CD14-positive monocyte (primary cell): ENCODE measurements at regions of chr17 and their contacts with region 1.

Region 1: DNA sequence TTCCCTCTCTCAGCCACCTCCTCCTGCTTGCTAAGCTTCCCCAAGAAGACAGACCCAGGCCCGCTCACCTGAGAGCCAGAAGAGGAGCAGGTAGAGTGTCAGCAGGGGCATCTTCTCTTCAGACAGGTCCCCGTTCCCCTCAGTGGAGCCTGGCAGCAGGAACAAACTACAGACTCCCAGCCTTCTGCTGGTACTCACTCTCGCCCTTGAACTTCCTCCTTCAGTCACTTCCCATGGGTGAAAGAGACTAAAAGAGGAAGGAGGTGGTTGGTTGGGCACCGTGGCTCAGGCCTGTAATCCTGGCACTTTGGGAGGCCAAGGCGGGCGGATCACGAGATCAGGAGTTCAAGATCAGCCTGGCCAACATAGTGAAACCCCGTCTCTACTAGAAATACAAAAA is at the start of gene CD300LF:
- DNase-seq: peak; percentile 87 to 90 (median 90)
- H3K4me3 ChIP-seq: peak within 1 kb of the TSS; percentile 65 to 95 (median 95)
- H3K4me3 Mint-ChIP-seq: peak within 1 kb of the TSS; percentile 96 to 100
- H3K27ac ChIP-seq: peak within 1 kb of the TSS; percentile 83 to 90
- H3K27ac Mint-ChIP-seq: peak within 1 kb of the TSS; percentile 97 to 99 (median 98)
- H3K4me1 ChIP-seq: peaks cover 35 to 61% of the 10 kb centered on the region in 2 donors
- H3K4me1 Mint-ChIP-seq: peaks cover 55% of the 10 kb centered on the region
- H3K27me3 ChIP-seq: no peaks in the 10 kb centered on the region
- H3K27me3 Mint-ChIP-seq: peaks cover 1 to 6% (median 3%) of the 10 kb centered on the region in 3 donors
- CTCF ChIP-seq: no peak
- polyA plus RNA-seq, gene CD300LF: 112 to 184 (median 175) TPM

Region 2: GRCh38 chr17:74671031-74671771 is 41.6 kb before region 1 on chr17:
- intact Hi-C with region 1: loop called (anchors 5 kb)
- DNase-seq: peak; percentile 77 to 81 (median 77)
- H3K4me3 ChIP-seq: no peak overlapping the region
- H3K4me3 Mint-ChIP-seq: peak overlapping the region in 1 of 2 donors; percentile 74
- H3K27ac ChIP-seq: no peak overlapping the region
- H3K27ac Mint-ChIP-seq: peak overlapping the region in 1 of 7 donors; percentile 19
- H3K4me1 ChIP-seq: peaks cover 0 to 2% of the 10 kb centered on the region in 2 donors
- H3K4me1 Mint-ChIP-seq: peaks cover 3% of the 10 kb centered on the region
- H3K27me3 ChIP-seq: peaks cover 34 to 50% of the 10 kb centered on the region in 2 donors
- H3K27me3 Mint-ChIP-seq: peaks cover 48 to 60% (median 49%) of the 10 kb centered on the region in 3 donors
- CTCF ChIP-seq: no peak

Region 3: GRCh38 chr17:74677558-74678466 is 34.9 kb before region 1 on chr17:
- intact Hi-C with region 1: loop called (anchors 5 kb)
- DNase-seq: peak in 2 of 3 donors; percentile 28 to 35
- H3K4me3 ChIP-seq: peak overlapping the region in 1 of 3 experiments; percentile 42
- H3K4me3 Mint-ChIP-seq: peak overlapping the region in 1 of 2 donors; percentile 62
- H3K27ac ChIP-seq: no peak overlapping the region
- H3K27ac Mint-ChIP-seq: peak overlapping the region in 3 of 7 donors; percentile 16 to 74 (median 64)
- H3K4me1 ChIP-seq: peaks cover 57 to 58% of the 10 kb centered on the region in 2 donors
- H3K4me1 Mint-ChIP-seq: peaks cover 57% of the 10 kb centered on the region
- H3K27me3 ChIP-seq: peaks cover under 1 to 2% of the 10 kb centered on the region in 2 donors
- H3K27me3 Mint-ChIP-seq: peaks cover 6 to 13% (median 8%) of the 10 kb centered on the region in 3 donors
- CTCF ChIP-seq: no peak

Region 4: DNA sequence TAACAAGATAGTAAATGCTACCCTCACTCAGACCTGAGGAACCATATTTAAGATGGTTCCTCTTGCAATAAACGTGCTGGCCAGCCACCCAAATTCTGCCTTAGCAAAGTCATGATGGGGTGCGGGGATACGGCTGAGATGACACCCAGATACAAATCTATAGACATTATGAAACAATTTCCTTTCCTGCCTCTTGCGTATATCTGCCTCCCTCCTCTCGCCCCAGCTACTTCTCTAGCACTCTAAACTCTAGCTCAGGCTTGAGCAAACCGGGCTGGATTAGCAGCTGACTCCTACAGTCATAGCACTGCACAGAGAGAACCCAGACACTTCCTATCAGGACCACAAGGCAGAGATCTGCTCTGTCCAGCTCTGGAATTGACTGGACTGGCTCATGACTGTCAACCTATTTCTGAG is 22.3 kb before region 1 on chr17:
- intact Hi-C with region 1: loop called in 1 of 2 experiments (anchors 2 kb)
- DNase-seq: peak; percentile 93 to 98 (median 93)
- H3K4me3 ChIP-seq: peak overlapping the region in 1 of 3 experiments; percentile 56
- H3K4me3 Mint-ChIP-seq: no peak overlapping the region
- H3K27ac ChIP-seq: peak overlapping the region; percentile 92 to 98
- H3K27ac Mint-ChIP-seq: peak overlapping the region; percentile 95 to 98 (median 97)
- H3K4me1 ChIP-seq: peaks cover 78 to 94% of the 10 kb centered on the region in 2 donors
- H3K4me1 Mint-ChIP-seq: peaks cover 91% of the 10 kb centered on the region
- H3K27me3 ChIP-seq: no peaks in the 10 kb centered on the region
- H3K27me3 Mint-ChIP-seq: peaks cover 0 to 2% (median 0%) of the 10 kb centered on the region in 3 donors
- CTCF ChIP-seq: no peak

Region 5: DNA sequence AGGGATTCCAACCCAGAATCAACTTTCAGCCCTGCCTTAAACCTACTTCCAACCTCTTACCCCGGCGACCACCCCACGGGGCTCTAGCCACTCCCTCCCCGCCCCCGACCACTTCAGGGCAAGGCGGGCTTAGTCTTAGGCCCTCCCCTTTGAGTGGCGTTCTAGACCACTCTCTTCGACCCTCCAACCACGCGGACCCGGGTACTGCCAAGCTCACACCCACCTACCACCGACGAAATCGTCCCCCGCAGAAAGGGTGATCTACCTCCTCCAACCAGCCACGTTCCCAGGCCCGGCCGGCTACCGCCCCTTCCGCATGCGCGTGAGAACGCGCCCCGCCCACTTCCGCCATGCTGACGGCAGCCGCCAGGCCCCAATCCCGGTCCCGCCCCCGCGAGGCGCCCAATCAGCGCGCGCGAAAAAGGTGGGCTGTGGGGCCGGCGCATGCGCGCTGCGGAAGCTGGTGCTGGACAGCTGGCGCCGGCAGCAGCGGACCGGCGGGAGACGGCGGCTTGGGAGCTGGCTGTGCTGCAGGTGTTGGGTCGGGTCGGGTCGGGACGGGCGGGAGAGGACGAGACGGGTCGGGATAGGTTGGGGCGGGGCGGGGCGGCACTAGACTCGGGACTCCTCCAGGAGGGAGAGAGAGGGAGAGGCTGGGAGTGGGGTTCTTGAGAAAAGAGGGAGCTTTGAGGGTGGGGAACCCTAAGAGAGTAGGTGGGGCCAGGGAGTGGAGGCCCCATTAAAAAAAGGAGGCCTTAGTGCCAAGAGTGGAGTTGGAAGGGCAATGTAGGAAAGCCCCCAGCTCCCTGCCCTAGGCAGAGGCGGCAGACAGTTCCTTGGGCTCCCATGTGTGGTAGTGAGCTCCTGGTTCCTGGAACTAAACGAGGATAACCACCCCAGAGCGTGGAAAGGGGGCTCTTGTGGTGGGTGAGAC is 63.6 kb after region 1 on chr17 and contains the start of gene NAT9:
- intact Hi-C with region 1: no loop called
- DNase-seq: peak; percentile 96 to 97 (median 97)
- H3K4me3 ChIP-seq: peak within 1 kb of the TSS; percentile 53 to 91 (median 76)
- H3K4me3 Mint-ChIP-seq: peak within 1 kb of the TSS; percentile 95 to 98
- H3K27ac ChIP-seq: peak within 1 kb of the TSS; percentile 72 to 81
- H3K27ac Mint-ChIP-seq: peak within 1 kb of the TSS; percentile 99 to 100 (median 100)
- H3K4me1 ChIP-seq: peaks cover 63 to 71% of the 10 kb centered on the region in 2 donors
- H3K4me1 Mint-ChIP-seq: peaks cover 66% of the 10 kb centered on the region
- H3K27me3 ChIP-seq: no peaks in the 10 kb centered on the region
- H3K27me3 Mint-ChIP-seq: peaks cover 0 to 4% (median 2%) of the 10 kb centered on the region in 3 donors
- CTCF ChIP-seq: no peak
- polyA plus RNA-seq, gene NAT9: 7.1 to 95.6 (median 7.8) TPM

Region 6: DNA sequence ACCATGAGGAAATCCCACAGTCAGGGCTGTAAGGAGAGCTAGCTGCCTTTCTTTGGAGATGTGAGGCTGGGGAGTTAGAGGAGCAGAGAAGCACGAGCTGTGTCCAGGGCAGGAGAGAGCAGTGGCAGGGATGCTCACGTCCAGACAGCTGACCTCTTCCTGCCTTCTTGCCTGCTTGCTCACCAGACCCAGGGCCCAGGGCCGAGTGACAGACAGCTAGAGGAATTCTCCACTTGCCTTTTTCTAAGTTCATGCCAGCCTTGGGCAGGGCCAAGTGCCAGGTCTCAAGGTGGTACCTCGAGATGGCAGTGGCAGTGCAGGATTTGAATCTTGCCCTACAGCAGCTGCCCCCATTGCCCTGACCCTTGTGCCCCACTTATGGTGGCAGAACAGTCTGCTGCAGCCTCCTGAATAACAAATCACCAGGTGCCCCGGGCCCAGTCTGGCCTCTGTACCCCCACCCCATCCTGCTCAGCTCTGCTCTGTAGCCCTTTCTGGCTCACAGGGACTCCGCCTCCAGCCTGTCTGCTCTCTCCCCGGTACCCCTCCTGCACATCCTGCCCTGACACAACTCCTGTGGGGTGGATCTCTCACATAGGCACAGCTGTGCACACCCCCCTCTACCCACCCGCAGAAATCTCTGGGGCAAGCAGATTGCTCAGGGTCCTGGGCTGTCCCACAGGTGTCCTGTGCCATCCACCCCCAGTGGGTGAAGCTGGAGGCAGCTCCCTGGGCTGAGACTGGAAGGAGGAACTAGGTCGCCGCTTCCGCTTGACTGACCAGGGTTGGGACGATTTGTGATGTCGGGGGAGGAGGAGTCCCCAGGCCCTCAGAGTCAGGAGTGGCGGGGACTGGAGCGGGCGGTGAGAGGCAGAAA is 121.0 kb after region 1 on chr17:
- intact Hi-C with region 1: no loop called
- DNase-seq: peak; percentile 39 to 61 (median 55)
- H3K4me3 ChIP-seq: no peak overlapping the region
- H3K4me3 Mint-ChIP-seq: peak overlapping the region; percentile 39 to 69
- H3K27ac ChIP-seq: peak overlapping the region in 1 of 2 donors; percentile 0
- H3K27ac Mint-ChIP-seq: peak overlapping the region in 5 of 7 donors; percentile 63 to 79 (median 72)
- H3K4me1 ChIP-seq: peaks cover 13 to 14% of the 10 kb centered on the region in 2 donors
- H3K4me1 Mint-ChIP-seq: peaks cover 14% of the 10 kb centered on the region
- H3K27me3 ChIP-seq: no peaks in the 10 kb centered on the region
- H3K27me3 Mint-ChIP-seq: peaks cover 0 to 5% (median 2%) of the 10 kb centered on the region in 3 donors
- CTCF ChIP-seq: no peak

Region 7: DNA sequence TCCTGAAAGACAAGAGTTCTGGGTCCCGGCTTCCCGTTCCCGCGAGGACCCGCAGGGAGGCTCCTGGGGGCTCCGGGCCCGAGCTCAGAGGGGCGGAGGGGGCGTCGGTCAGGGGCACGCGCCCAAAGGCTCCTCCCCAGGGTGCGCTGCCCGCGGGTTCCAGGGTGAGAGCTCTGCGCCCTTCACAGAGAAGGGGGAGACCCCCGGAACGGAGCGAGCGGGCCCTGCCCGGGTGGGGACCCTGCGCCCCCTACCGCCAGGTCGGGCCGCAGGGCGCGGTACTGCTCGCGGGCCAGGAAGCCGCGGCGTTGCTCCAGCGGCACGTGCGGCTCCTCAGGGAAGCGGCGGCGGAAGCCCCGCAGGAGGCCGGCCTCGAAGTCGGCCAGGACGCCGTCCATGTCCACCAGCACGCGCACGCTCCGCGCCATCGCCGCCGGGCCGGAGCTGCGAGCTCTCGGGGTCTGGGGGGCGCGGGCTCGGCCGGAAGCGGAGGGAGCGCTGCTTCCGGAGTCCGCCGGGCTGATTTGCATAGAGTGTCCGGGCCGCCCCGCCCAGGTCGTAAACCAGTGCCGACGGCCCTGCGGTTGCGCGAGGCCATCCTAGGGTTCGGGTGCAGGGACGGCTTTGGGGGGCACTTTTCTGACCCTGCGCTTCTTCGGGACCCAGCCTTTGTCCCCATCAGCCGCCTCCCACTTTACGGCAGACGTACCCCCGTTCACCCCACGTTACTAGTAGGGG is 418.7 kb after region 1 on chr17 and contains the start of gene NT5C:
- intact Hi-C with region 1: no loop called
- DNase-seq: peak; percentile 43 to 56 (median 54)
- H3K4me3 ChIP-seq: peak within 1 kb of the TSS; percentile 72 to 92 (median 73)
- H3K4me3 Mint-ChIP-seq: peak within 1 kb of the TSS; percentile 84 to 88
- H3K27ac ChIP-seq: peak within 1 kb of the TSS; percentile 50 to 75
- H3K27ac Mint-ChIP-seq: peak within 1 kb of the TSS; percentile 56 to 84 (median 76)
- H3K4me1 ChIP-seq: peaks cover 17 to 25% of the 10 kb centered on the region in 2 donors
- H3K4me1 Mint-ChIP-seq: peaks cover 14% of the 10 kb centered on the region
- H3K27me3 ChIP-seq: no peaks in the 10 kb centered on the region
- H3K27me3 Mint-ChIP-seq: no peaks in the 10 kb centered on the region
- CTCF ChIP-seq: peak; percentile 53
- polyA plus RNA-seq, gene NT5C: 27.8 to 45.6 (median 36.2) TPM